ENCODE measurements at regions of chr17 and their contacts with region 1.

Region 1: GRCh38 chr17:36999471-36999870 is 50.7 kb downstream of the AATF start:
- DNase-seq: no peak
- ATAC-seq: no peak
- H3K4me3 ChIP-seq: no peak overlapping the region
- H3K27ac ChIP-seq: no peak overlapping the region
- H3K4me1 ChIP-seq: no peaks in the 10 kb centered on the region
- H3K27me3 ChIP-seq: no peaks in the 10 kb centered on the region
- CTCF ChIP-seq: no peak

Region 2: GRCh38 chr17:36655726-36656125 is 343.7 kb before region 1 on chr17:
- CTCF ChIA-PET with region 1: no interaction called
- POLR2A ChIA-PET with region 1: interaction called, 15 read pairs
- in situ Hi-C with region 1: no loop called
- intact Hi-C with region 1: no loop called
- DNase-seq: no peak
- ATAC-seq: no peak
- H3K4me3 ChIP-seq: no peak overlapping the region
- H3K27ac ChIP-seq: no peak overlapping the region
- H3K4me1 ChIP-seq: no peaks in the 10 kb centered on the region
- H3K27me3 ChIP-seq: no peaks in the 10 kb centered on the region
- CTCF ChIP-seq: no peak

Region 3: DNA sequence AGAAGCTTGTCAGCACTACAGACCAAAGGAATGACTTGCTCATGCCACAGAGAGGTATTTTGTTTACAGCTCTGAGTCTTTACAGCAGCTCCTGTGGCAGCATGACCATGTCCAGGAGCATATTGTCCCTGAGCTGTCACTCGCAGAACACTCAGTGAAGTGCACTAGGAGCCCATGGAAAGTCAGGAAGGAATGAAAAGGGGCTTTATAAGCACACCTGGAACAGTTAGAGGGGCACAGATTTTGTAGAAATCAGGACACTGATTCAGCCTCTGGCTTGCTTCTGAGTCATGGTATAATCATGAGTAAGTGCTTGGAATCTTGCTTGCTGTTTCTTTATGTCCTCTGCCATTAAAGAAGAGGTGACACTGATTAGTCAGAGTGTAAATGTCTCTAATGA is 448.2 kb after region 1 on chr17:
- CTCF ChIA-PET with region 1: no interaction called
- POLR2A ChIA-PET with region 1: interaction called, 11 read pairs
- in situ Hi-C with region 1: no loop called
- intact Hi-C with region 1: no loop called
- DNase-seq: no peak
- ATAC-seq: peak; percentile 81
- H3K4me3 ChIP-seq: no peak overlapping the region
- H3K27ac ChIP-seq: no peak overlapping the region
- H3K4me1 ChIP-seq: no peaks in the 10 kb centered on the region; the same call in 1 of the 2 replicates
- H3K27me3 ChIP-seq: no peaks in the 10 kb centered on the region
- CTCF ChIP-seq: no peak

Measured in Panc1 (cell line).